ENCODE measurements at regions of chr6 and their contacts with region 1.

Region 1: DNA sequence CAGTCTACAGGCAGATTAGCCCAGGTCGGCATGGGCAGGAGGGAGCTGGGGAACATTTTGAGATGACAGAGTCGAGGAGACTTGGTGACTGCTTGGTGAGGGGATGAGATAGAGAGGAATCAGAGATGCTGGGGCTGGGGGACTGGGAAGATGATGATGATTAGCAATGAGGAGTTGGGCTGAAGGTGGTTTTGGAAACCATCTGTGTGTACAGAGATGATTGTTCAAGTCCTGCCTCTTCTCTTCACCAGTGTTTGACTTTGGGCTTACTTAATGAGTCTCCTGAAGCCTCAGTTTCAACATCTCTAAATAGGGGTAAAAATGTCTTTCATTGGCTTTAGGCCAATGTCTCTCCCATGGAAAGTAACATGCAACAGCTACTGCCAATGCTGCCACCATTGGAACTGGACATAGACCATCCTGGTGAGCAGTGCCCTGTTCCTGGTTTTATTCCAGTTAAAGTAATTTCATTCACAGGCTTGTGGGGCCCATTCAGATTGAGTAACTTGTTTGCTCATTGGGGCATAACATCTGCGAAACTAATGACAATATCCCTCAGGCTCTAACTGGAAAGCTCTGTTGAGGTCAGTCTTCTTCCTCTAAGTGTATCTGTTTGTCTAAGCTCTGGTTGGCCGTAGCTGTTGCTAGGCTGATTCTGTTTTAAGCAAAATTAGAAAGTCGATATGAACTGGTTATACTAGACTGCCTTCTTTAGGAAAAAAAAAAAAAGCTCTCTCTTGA is 99.1 kb downstream of the ARMC2 start:
- DNase-seq: no peak
- ATAC-seq: peak; percentile 35 to 63

Region 2: DNA sequence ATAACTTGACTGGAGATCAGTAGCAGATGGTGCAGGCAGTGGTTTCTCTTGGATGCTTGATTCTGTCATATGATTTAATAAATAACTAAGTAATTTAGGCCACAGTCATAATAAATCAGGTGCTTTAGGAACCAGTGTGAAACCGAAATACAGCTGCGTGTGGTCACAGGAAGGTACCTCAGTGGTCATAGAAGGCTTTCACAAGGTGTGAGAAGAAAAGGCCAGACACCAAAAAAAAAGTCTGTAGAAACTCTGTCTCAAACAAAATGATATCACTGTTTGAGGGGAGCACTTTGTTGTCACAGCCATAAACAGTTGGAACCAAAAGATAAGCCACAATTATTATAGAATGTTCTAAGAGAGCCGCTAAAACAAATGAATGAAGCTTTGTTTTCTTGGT is 42.5 kb before region 1 on chr6:
- intact Hi-C with region 1: loop called in 1 of 2 experiments (anchors 5 kb)
- DNase-seq: no peak
- ATAC-seq: no peak

Region 3: DNA sequence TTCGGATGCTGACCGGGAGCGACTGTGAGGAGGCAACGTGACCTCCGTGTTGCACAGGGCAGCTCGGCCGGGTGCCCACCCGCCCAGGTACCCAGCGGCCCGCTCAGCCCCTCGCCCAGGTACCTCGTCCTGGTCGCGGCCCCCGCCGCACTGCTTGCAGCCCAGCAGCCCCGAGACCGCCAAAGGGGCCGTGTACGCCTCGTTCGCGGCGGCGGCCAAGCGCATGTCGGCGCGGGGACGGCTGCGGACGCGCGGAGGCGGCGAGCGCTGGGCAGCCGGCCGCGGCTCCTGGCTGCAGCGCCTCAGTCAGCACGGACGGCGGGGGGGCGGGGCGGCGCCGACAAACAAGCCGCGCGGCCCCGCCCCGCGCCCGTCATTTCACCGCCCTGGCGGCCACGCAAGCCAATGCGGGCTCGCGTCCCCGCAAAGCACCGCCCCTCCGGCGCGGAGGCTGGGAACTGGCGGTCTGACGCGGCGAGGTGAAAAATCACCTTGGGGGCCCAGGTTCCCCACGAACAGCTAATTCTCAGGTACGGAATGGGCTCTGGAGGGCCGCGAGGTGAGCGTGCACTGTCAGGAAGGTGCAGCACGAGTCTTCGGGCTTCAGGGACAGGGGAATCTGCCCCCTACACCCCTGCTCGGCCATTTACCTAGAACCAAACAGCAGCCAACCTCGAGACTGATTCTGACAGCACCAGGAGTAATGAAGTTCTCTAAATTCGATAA is 62.1 kb after region 1 on chr6:
- intact Hi-C with region 1: loop called in 1 of 2 experiments (anchors 5 kb)
- DNase-seq: peak; percentile 97
- ATAC-seq: peak; percentile 98 to 99

Measured in left cardiac atrium (tissue), 4 donors.